GM12878 (cell line): ENCODE measurements at regions of chr3 and their contacts with region 1.

Region 1: DNA sequence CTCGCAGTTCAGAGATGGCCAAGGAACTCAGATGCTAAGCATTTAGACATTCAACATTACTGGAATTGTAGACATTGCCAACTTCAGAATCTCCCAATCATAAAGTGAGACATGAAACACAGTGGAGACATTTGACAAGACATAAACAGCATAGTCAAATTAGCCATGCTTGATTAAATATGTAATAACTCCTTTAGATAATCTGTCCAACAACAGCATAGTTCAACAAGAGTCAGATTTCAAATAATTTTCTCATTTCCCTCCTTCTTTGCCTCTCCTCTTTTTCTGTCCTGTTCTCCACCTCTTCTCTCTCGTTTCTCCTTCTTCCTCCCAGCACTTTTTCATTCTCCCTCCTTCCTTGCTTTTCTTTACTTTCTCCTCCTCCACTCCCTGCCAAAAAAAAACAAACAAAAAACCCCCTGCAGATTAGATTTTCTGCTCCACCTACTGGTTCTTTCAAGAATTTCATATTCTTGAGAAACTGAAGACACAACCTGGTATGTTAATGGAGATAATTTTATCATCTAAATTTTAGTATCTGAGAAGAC is 20.2 kb downstream of the CPOX start:
- DNase-seq: no peak
- ATAC-seq: peak; percentile 85
- H3K4me3 ChIP-seq: peak overlapping the region; percentile 42; the same call in 1 of the 2 replicates
- H3K27ac ChIP-seq: peak overlapping the region; percentile 79
- H3K4me1 ChIP-seq: peaks cover 15% of the 10 kb centered on the region
- H3K27me3 ChIP-seq: no peaks in the 10 kb centered on the region
- CTCF ChIP-seq: peak; percentile 42 to 53 (median 53); a peak in 5 of 6 replicates
- EP300 ChIP-seq: no peak
- POLR2A ChIP-seq: no peak
- RAD21 ChIP-seq: peak; percentile 92

Region 2: DNA sequence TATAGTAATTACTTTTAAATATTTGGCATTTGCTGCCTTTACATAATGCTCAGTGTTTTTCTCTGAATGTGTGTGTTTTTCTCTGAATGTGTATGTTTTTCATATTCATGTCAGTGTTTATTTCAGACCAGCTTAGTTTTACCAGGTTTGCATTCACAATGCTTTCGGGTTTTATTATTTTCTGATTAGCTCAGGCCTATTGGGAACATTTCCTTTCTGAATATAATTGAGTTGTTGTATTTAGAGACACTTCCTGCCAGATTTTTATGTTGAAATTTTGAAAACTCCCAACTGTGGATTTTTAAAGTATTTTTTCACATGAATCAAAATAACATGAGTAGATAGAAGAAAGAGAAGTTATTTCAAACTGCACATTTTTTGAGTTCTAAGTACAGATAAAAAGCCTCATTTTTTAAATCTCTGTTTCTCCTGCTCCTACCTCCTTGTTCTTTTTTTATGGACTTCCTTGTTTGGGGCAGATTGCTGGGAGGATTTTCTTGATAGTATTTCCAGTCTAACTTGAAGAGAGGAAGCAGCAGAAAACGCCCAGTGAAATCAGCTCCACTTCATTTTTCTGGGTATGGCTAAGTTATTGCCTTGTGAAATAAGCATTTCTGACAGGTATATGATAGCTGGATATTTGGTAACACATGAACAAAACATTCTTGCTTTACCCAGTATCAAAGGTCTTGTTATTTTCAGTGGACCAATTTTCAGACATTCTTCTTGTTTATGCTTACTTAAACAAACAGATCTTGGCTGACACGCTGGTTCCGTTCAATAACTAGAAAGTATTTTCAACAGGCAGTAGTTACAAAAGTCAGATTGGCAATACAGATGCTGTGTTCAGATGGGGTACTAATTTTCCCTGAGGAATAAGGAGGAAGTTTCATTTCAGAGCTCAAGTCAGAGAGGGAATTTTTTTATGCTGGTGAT is 671.7 kb before region 1 on chr3:
- CTCF ChIA-PET with region 1: no interaction called
- POLR2A ChIA-PET with region 1: no interaction called
- RAD21 ChIA-PET with region 1: no interaction called
- SMC1A ChIA-PET with region 1: no interaction called
- in situ Hi-C with region 1: no loop called
- intact Hi-C with region 1: no loop called
- DNase-seq: no peak
- ATAC-seq: no peak
- H3K4me3 ChIP-seq: no peak overlapping the region
- H3K27ac ChIP-seq: no peak overlapping the region
- H3K4me1 ChIP-seq: no peaks in the 10 kb centered on the region
- H3K27me3 ChIP-seq: no peaks in the 10 kb centered on the region
- CTCF ChIP-seq: no peak
- EP300 ChIP-seq: no peak
- POLR2A ChIP-seq: no peak
- RAD21 ChIP-seq: no peak

Region 3: GRCh38 chr3:98039322-98040024 is 533.8 kb before region 1 on chr3:
- CTCF ChIA-PET with region 1: interaction called, 25 read pairs
- POLR2A ChIA-PET with region 1: no interaction called
- RAD21 ChIA-PET with region 1: interaction called, 3 read pairs
- SMC1A ChIA-PET with region 1: interaction called, 5 read pairs
- in situ Hi-C with region 1: no loop called
- intact Hi-C with region 1: no loop called
- DNase-seq: peak; percentile 79
- ATAC-seq: peak; percentile 97
- H3K4me3 ChIP-seq: peak overlapping the region; percentile 66; the same call in 1 of the 2 replicates
- H3K27ac ChIP-seq: no peak overlapping the region
- H3K4me1 ChIP-seq: no peaks in the 10 kb centered on the region
- H3K27me3 ChIP-seq: no peaks in the 10 kb centered on the region; a peak in 1 of 4 replicates
- CTCF ChIP-seq: peak; percentile 61 to 95 (median 67)
- EP300 ChIP-seq: no peak
- POLR2A ChIP-seq: no peak
- RAD21 ChIP-seq: peak; percentile 86

Region 4: GRCh38 chr3:98359993-98360675 is 213.1 kb before region 1 on chr3:
- CTCF ChIA-PET with region 1: no interaction called
- POLR2A ChIA-PET with region 1: no interaction called
- RAD21 ChIA-PET with region 1: interaction called, 4 read pairs
- SMC1A ChIA-PET with region 1: no interaction called
- in situ Hi-C with region 1: no loop called
- intact Hi-C with region 1: loop called (anchors 1 kb)
- DNase-seq: peak; percentile 48
- ATAC-seq: peak; percentile 95
- H3K4me3 ChIP-seq: no peak overlapping the region; the same call in 1 of the 2 replicates
- H3K27ac ChIP-seq: no peak overlapping the region
- H3K4me1 ChIP-seq: peaks cover 5% of the 10 kb centered on the region; the same call in 1 of the 2 replicates
- H3K27me3 ChIP-seq: no peaks in the 10 kb centered on the region
- CTCF ChIP-seq: peak; percentile 31 to 56 (median 44)
- EP300 ChIP-seq: no peak
- POLR2A ChIP-seq: no peak
- RAD21 ChIP-seq: peak; percentile 61

Region 5: DNA sequence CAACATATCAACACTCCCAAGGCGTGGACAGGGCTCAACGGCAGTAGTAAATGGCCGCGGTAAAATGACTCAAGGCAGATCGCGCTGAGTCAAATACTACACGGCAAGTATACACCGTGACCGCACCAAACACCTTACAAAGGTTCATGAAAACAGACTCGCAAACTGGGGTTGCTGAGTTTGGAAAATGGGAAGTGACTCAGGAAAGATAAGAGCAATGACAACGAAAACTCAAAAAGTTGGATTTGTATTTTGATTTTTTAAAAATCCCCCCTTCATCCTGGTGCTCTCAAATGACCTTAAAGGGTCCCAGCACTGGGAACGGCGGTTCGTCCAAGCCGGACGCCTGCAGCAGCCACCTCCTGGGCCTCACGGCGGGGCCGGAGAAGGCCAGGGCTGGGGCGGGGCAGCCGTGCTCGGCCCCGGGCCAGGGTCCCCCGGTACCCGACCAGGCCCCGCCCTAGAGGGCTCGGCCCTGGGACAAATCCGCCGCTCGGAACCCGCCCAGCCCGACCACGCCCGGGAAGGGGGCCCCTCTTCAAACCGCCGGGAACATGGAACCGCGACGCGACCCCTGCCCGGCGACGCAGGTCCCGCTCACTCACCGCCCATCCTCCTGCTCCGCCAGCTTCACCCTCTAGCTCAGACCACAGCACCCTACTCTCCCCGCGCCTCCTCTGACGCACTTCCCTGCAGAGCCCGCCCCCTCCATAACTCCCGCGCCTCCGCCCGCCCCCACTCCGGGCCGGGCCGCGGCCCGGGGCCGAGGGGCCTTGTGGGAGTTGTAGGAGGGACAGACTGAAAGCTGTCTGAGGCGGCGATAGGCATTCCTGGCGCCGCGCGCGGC is 50.8 kb before region 1 on chr3 and contains the start of gene CLDND1:
- CTCF ChIA-PET with region 1: interaction called, 9 read pairs
- POLR2A ChIA-PET with region 1: interaction called, 8 read pairs
- RAD21 ChIA-PET with region 1: interaction called, 19 read pairs
- SMC1A ChIA-PET with region 1: interaction called, 7 read pairs
- in situ Hi-C with region 1: no loop called
- intact Hi-C with region 1: no loop called
- DNase-seq: peak; percentile 88
- ATAC-seq: peak; percentile 86
- H3K4me3 ChIP-seq: peak within 1 kb of the TSS; percentile 82
- H3K27ac ChIP-seq: peak within 1 kb of the TSS; percentile 85
- H3K4me1 ChIP-seq: peaks cover 13% of the 10 kb centered on the region; the same call in 1 of the 2 replicates
- H3K27me3 ChIP-seq: no peaks in the 10 kb centered on the region
- CTCF ChIP-seq: no peak
- EP300 ChIP-seq: no peak
- POLR2A ChIP-seq: peak; percentile 94
- RAD21 ChIP-seq: no peak
- polyA plus RNA-seq, gene CLDND1: 150 to 163 TPM

Region 6: GRCh38 chr3:98545940-98546339 is 27.3 kb before region 1 on chr3:
- CTCF ChIA-PET with region 1: interaction called, 6 read pairs
- POLR2A ChIA-PET with region 1: interaction called, 3 read pairs
- RAD21 ChIA-PET with region 1: interaction called, 511 read pairs
- SMC1A ChIA-PET with region 1: interaction called, 230 read pairs
- in situ Hi-C with region 1: no loop called
- intact Hi-C with region 1: no loop called
- DNase-seq: no peak
- ATAC-seq: peak; percentile 49
- H3K4me3 ChIP-seq: peak overlapping the region; percentile 72
- H3K27ac ChIP-seq: peak overlapping the region; percentile 63
- H3K4me1 ChIP-seq: peaks cover 39% of the 10 kb centered on the region; the same call in 1 of the 2 replicates
- H3K27me3 ChIP-seq: no peaks in the 10 kb centered on the region
- CTCF ChIP-seq: no peak
- EP300 ChIP-seq: no peak
- POLR2A ChIP-seq: no peak
- RAD21 ChIP-seq: no peak

Region 7: DNA sequence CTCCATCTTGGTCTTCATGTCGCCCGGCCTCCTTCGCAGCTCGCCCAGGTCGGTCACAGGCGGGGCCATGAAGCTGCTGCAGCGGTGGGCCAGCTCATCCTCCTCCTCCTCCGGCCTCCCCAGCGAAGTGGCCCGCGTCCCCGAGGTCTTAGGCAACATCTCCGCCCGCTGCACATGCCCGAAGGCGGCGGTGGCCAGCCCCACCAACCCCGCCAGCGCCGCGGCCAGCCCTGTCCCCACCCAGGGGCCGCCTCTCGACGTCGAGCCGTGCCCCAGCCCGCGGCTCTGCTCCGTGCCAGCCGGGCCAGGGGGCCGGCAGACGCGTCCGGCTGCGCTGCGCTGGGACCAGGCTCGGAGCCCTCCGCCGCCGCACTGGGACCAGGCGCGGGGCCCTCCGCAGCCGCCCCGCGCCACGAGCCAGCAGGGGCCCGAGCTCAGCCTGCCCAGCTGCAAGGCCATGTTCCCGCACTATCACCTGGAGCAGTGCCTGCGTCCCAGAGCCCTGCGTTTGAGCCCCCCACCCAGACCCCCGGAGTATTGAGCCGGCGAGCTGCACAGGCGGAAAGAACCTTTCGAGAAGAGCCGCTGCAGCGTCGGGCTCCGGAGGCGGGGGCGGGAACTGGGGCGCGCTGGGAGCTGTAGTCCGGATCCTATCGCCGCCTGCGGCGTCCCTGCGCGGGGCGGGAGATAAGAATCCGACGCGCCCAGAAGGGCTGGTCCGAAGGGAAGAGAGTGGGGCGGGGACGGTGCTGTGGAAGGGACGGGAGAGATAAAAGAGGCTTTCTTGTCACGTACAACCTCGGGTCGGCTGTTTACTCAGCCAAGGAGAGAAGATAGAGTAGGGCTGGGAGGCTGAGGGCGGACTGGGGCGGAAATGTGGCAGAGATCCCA is 20.0 kb after region 1 on chr3 and contains the start of gene CPOX:
- CTCF ChIA-PET with region 1: interaction called, 10 read pairs
- POLR2A ChIA-PET with region 1: interaction called, 5 read pairs
- RAD21 ChIA-PET with region 1: interaction called, 8 read pairs
- SMC1A ChIA-PET with region 1: interaction called, 74 read pairs
- in situ Hi-C with region 1: no loop called
- intact Hi-C with region 1: no loop called
- DNase-seq: peak; percentile 76
- ATAC-seq: peak; percentile 96
- H3K4me3 ChIP-seq: peak within 1 kb of the TSS; percentile 81
- H3K27ac ChIP-seq: peak within 1 kb of the TSS; percentile 84
- H3K4me1 ChIP-seq: peaks cover 7% of the 10 kb centered on the region
- H3K27me3 ChIP-seq: no peaks in the 10 kb centered on the region
- CTCF ChIP-seq: no peak
- EP300 ChIP-seq: no peak
- POLR2A ChIP-seq: peak; percentile 76
- RAD21 ChIP-seq: 0 out of 2 replicates have a peak, but pooled peaks have one; percentile 1
- polyA plus RNA-seq, gene CPOX: 40.7 to 45.8 TPM